Naive thymus-derived CD4-positive, alpha-beta T cell (primary cell): ENCODE measurements at regions of chr1 and their contacts with region 1.

Region 1: GRCh38 chr1:28976248-28976647 is 61.9 kb downstream of the EPB41 start:
- DNase-seq: no peak
- ATAC-seq: no peak
- H3K4me3 ChIP-seq: no peak overlapping the region
- H3K4me3 Mint-ChIP-seq: peak overlapping the region in 3 of 10 donors; percentile 4 to 34 (median 24)
- H3K27ac ChIP-seq: no peak overlapping the region
- H3K27ac Mint-ChIP-seq: peak overlapping the region in 6 of 9 donors; percentile 22 to 58 (median 34)
- H3K4me1 ChIP-seq: peaks cover 6 to 17% of the 10 kb centered on the region in 2 donors
- H3K4me1 Mint-ChIP-seq: peaks cover 42 to 93% (median 86%) of the 10 kb centered on the region in 7 donors
- H3K27me3 ChIP-seq: no peaks in the 10 kb centered on the region
- H3K27me3 Mint-ChIP-seq: no peaks in the 10 kb centered on the region

Region 2: GRCh38 chr1:28551381-28551780 is 424.9 kb before region 1 on chr1:
- CTCF ChIA-PET with region 1: no interaction called
- POLR2A ChIA-PET with region 1: no interaction called
- intact Hi-C with region 1: no loop called
- DNase-seq: no peak
- ATAC-seq: no peak
- H3K4me3 ChIP-seq: no peak overlapping the region
- H3K4me3 Mint-ChIP-seq: peak overlapping the region in 6 of 10 donors; percentile 12 to 99 (median 32)
- H3K27ac ChIP-seq: no peak overlapping the region
- H3K27ac Mint-ChIP-seq: peak overlapping the region in 7 of 9 donors; percentile 56 to 98 (median 94)
- H3K4me1 ChIP-seq: peaks cover 0 to 15% of the 10 kb centered on the region in 2 donors
- H3K4me1 Mint-ChIP-seq: peaks cover 10 to 26% (median 19%) of the 10 kb centered on the region in 7 donors
- H3K27me3 ChIP-seq: no peaks in the 10 kb centered on the region
- H3K27me3 Mint-ChIP-seq: no peaks in the 10 kb centered on the region

Region 3: GRCh38 chr1:29002792-29003191 is 26.5 kb after region 1 on chr1:
- CTCF ChIA-PET with region 1: no interaction called
- POLR2A ChIA-PET with region 1: interaction called, 3 read pairs
- intact Hi-C with region 1: loop called in 1 of 2 experiments (anchors 2 kb)
- DNase-seq: no peak
- ATAC-seq: no peak
- H3K4me3 ChIP-seq: no peak overlapping the region
- H3K4me3 Mint-ChIP-seq: no peak overlapping the region
- H3K27ac ChIP-seq: no peak overlapping the region
- H3K27ac Mint-ChIP-seq: peak overlapping the region in 4 of 9 donors; percentile 4 to 38 (median 28)
- H3K4me1 ChIP-seq: no peaks in the 10 kb centered on the region
- H3K4me1 Mint-ChIP-seq: peaks cover 13 to 58% (median 41%) of the 10 kb centered on the region in 7 donors
- H3K27me3 ChIP-seq: no peaks in the 10 kb centered on the region
- H3K27me3 Mint-ChIP-seq: no peaks in the 10 kb centered on the region